ENCODE measurements at regions of chr7 and their contacts with region 1.

Region 1: GRCh38 chr7:144835652-144836544 is at the start of gene TPK1:
- DNase-seq: peak; percentile 79 to 92 (median 91)
- H3K4me3 ChIP-seq: peak within 1 kb of the TSS; percentile 98
- H3K4me3 Mint-ChIP-seq: peak within 1 kb of the TSS; percentile 93 to 100 (median 96)
- H3K27ac ChIP-seq: peak within 1 kb of the TSS; percentile 87
- H3K27ac Mint-ChIP-seq: peak within 1 kb of the TSS; percentile 92 to 98 (median 97)
- H3K4me1 ChIP-seq: peaks cover 40% of the 10 kb centered on the region
- H3K4me1 Mint-ChIP-seq: peaks cover 28 to 47% (median 38%) of the 10 kb centered on the region in 3 donors
- H3K27me3 ChIP-seq: no peaks in the 10 kb centered on the region
- H3K27me3 Mint-ChIP-seq: no peaks in the 10 kb centered on the region
- total RNA-seq, gene TPK1: 18.0 to 19.0 TPM

Region 2: DNA sequence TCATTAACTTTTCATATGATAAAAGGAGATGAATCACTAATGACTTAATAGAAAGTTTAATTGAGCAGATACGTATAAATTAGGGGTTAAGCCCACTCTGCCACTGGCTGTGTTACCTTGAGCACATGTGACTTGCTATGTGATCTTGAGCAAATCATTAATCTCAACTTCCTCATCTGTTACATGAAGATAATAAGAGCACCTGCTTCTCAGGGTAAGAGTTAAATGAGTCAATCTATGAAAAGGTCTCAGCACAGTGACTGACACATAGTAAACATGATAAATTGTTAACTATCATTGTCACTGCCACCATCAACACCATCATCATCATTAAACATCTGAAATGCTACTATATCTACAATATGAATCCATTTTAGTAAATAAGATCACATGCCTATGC is 110.8 kb before region 1 on chr7:
- CTCF ChIA-PET with region 1: no interaction called
- POLR2A ChIA-PET with region 1: no interaction called
- DNase-seq: no peak
- H3K4me3 ChIP-seq: no peak overlapping the region
- H3K4me3 Mint-ChIP-seq: no peak overlapping the region
- H3K27ac ChIP-seq: no peak overlapping the region
- H3K27ac Mint-ChIP-seq: no peak overlapping the region
- H3K4me1 ChIP-seq: no peaks in the 10 kb centered on the region
- H3K4me1 Mint-ChIP-seq: peaks cover 0 to 5% (median 0%) of the 10 kb centered on the region in 3 donors
- H3K27me3 ChIP-seq: no peaks in the 10 kb centered on the region
- H3K27me3 Mint-ChIP-seq: no peaks in the 10 kb centered on the region

Region 3: GRCh38 chr7:144738708-144739314 is 97.1 kb before region 1 on chr7:
- CTCF ChIA-PET with region 1: interaction called, 12 read pairs
- POLR2A ChIA-PET with region 1: interaction called, 5 read pairs
- DNase-seq: peak in 2 of 5 donors; percentile 22 to 33
- H3K4me3 ChIP-seq: no peak overlapping the region
- H3K4me3 Mint-ChIP-seq: no peak overlapping the region
- H3K27ac ChIP-seq: no peak overlapping the region
- H3K27ac Mint-ChIP-seq: no peak overlapping the region
- H3K4me1 ChIP-seq: no peaks in the 10 kb centered on the region
- H3K4me1 Mint-ChIP-seq: peaks cover 0 to 7% (median 5%) of the 10 kb centered on the region in 3 donors
- H3K27me3 ChIP-seq: no peaks in the 10 kb centered on the region
- H3K27me3 Mint-ChIP-seq: no peaks in the 10 kb centered on the region

Region 4: DNA sequence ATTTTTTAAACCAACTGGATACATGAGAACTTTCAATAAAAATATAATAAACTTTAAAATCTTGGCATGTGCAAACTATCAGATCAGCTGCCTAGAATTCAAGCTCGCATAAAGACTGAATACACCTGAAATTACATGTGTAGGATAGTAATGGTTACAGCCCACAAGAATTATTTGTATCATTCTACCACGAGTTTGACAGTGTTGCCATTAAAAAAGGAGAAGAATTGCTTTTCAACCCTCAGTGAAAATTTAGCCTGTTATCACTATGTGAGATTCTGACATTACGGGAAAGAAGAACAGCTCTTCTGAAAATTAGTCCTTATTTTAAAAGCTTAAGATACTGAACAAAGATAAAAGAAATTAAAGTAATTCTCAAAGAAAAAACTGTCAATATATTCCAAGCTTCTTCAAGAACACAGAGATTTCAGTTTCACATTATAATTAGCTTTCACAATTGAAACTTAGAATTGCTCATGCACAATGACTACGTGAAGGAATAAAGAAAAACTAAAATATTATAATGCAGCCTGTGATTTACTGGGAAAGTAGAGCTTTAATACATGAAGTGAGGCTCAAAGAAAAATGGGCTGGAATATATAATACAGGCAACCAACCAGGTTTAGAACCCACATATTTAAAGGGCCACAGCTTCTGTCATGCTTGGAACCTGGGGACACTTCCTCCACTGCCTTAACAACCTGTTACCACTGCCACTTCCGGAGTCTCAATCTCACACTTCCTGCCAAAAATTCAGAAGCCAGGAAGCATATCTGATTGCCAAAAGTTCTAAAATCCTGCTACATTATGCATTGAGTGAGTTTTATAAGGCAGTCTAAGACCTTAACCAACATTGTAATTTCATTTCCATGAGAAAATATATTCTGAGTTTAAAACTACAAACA is 23.3 kb before region 1 on chr7:
- CTCF ChIA-PET with region 1: interaction called, 22 read pairs
- POLR2A ChIA-PET with region 1: interaction called, 62 read pairs
- DNase-seq: peak in 4 of 5 donors; percentile 18 to 76 (median 54)
- H3K4me3 ChIP-seq: peak overlapping the region; percentile 9
- H3K4me3 Mint-ChIP-seq: peak overlapping the region; percentile 8 to 86 (median 68)
- H3K27ac ChIP-seq: no peak overlapping the region
- H3K27ac Mint-ChIP-seq: peak overlapping the region; percentile 72 to 94 (median 88)
- H3K4me1 ChIP-seq: peaks cover 40% of the 10 kb centered on the region
- H3K4me1 Mint-ChIP-seq: peaks cover 44 to 78% (median 65%) of the 10 kb centered on the region in 3 donors
- H3K27me3 ChIP-seq: no peaks in the 10 kb centered on the region
- H3K27me3 Mint-ChIP-seq: no peaks in the 10 kb centered on the region

Region 5: GRCh38 chr7:144818511-144818910 is 17.4 kb before region 1 on chr7:
- CTCF ChIA-PET with region 1: interaction called, 21 read pairs
- POLR2A ChIA-PET with region 1: interaction called, 95 read pairs
- DNase-seq: peak in 4 of 5 donors; percentile 25 to 76 (median 66)
- H3K4me3 ChIP-seq: no peak overlapping the region
- H3K4me3 Mint-ChIP-seq: peak overlapping the region; percentile 0 to 55 (median 36)
- H3K27ac ChIP-seq: no peak overlapping the region
- H3K27ac Mint-ChIP-seq: peak overlapping the region; percentile 50 to 97 (median 79)
- H3K4me1 ChIP-seq: peaks cover 59% of the 10 kb centered on the region
- H3K4me1 Mint-ChIP-seq: peaks cover 48 to 86% (median 77%) of the 10 kb centered on the region in 3 donors
- H3K27me3 ChIP-seq: no peaks in the 10 kb centered on the region
- H3K27me3 Mint-ChIP-seq: no peaks in the 10 kb centered on the region

Region 6: GRCh38 chr7:144866189-144866588 is 30.3 kb after region 1 on chr7:
- CTCF ChIA-PET with region 1: no interaction called
- POLR2A ChIA-PET with region 1: no interaction called
- DNase-seq: no peak
- H3K4me3 ChIP-seq: no peak overlapping the region
- H3K4me3 Mint-ChIP-seq: no peak overlapping the region
- H3K27ac ChIP-seq: no peak overlapping the region
- H3K27ac Mint-ChIP-seq: no peak overlapping the region
- H3K4me1 ChIP-seq: no peaks in the 10 kb centered on the region
- H3K4me1 Mint-ChIP-seq: no peaks in the 10 kb centered on the region
- H3K27me3 ChIP-seq: no peaks in the 10 kb centered on the region
- H3K27me3 Mint-ChIP-seq: peaks cover 14 to 28% of the 10 kb centered on the region in 2 donors

Measured in CD8-positive, alpha-beta memory T cell (primary cell).